Endothelial cell of umbilical vein (primary cell): ENCODE measurements at regions of chr6 and their contacts with region 1.

Region 1: GRCh38 chr6:163585932-163586437 is 171.5 kb downstream of the QKI start:
- DNase-seq: peak; percentile 76
- H3K4me3 ChIP-seq: no peak overlapping the region
- H3K27ac ChIP-seq: peak overlapping the region; percentile 21
- H3K4me1 ChIP-seq: peaks cover 20% of the 10 kb centered on the region
- H3K27me3 ChIP-seq: no peaks in the 10 kb centered on the region
- CTCF ChIP-seq: no peak
- POLR2A ChIP-seq: no peak

Region 2: GRCh38 chr6:163180874-163181541 is 405.0 kb before region 1 on chr6:
- CTCF ChIA-PET with region 1: no interaction called
- POLR2A ChIA-PET with region 1: no interaction called
- dilution Hi-C with region 1: no loop called
- intact Hi-C with region 1: loop called (anchors 10 kb)
- DNase-seq: peak; percentile 71
- H3K4me3 ChIP-seq: no peak overlapping the region
- H3K27ac ChIP-seq: no peak overlapping the region
- H3K4me1 ChIP-seq: no peaks in the 10 kb centered on the region
- H3K27me3 ChIP-seq: peaks cover 4 to 9% of the 10 kb centered on the region in 2 experiments
- CTCF ChIP-seq: peak; percentile 93 to 97
- POLR2A ChIP-seq: no peak